ENCODE measurements at regions of chr6 and their contacts with region 1.

Region 1: GRCh38 chr6:46410334-46410953 is 80.8 kb downstream of the RCAN2 start:
- DNase-seq: no peak
- H3K4me3 Mint-ChIP-seq: no peak overlapping the region
- H3K27ac Mint-ChIP-seq: no peak overlapping the region
- H3K4me1 Mint-ChIP-seq: no peaks in the 10 kb centered on the region
- H3K27me3 Mint-ChIP-seq: peaks cover 9% of the 10 kb centered on the region

Region 2: GRCh38 chr6:45930420-45931040 is 479.9 kb before region 1 on chr6:
- intact Hi-C with region 1: loop called (anchors 5 kb)
- DNase-seq: peak; percentile 33
- H3K4me3 Mint-ChIP-seq: no peak overlapping the region
- H3K27ac Mint-ChIP-seq: no peak overlapping the region
- H3K4me1 Mint-ChIP-seq: peaks cover 23% of the 10 kb centered on the region
- H3K27me3 Mint-ChIP-seq: no peaks in the 10 kb centered on the region

Region 3: GRCh38 chr6:46042355-46042999 is 368.0 kb before region 1 on chr6:
- intact Hi-C with region 1: loop called (anchors 5 kb)
- DNase-seq: no peak
- H3K4me3 Mint-ChIP-seq: no peak overlapping the region
- H3K27ac Mint-ChIP-seq: no peak overlapping the region
- H3K4me1 Mint-ChIP-seq: peaks cover 6% of the 10 kb centered on the region
- H3K27me3 Mint-ChIP-seq: peaks cover 5% of the 10 kb centered on the region

Region 4: DNA sequence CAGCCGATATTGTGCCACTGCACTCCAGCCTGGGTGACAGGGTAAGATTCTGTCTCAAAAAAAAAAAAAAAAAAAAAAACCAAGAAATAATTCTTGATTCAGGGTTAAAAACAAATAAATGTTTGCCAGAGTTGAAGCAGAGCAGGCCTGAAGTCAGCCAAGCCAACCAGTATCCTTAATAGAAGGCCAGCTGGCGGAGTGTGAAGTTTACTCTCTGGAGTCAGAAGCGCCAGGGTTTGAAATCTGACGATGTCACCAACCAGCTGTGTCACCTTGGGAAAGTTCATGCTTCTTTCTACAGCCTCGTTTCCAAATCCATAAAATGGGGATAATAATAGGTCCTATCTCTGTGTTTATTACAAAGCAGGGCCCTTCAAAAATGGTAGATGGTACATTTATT is 166.7 kb before region 1 on chr6:
- intact Hi-C with region 1: no loop called
- DNase-seq: no peak
- H3K4me3 Mint-ChIP-seq: no peak overlapping the region
- H3K27ac Mint-ChIP-seq: no peak overlapping the region
- H3K4me1 Mint-ChIP-seq: peaks cover 2% of the 10 kb centered on the region
- H3K27me3 Mint-ChIP-seq: peaks cover 17% of the 10 kb centered on the region

Region 5: DNA sequence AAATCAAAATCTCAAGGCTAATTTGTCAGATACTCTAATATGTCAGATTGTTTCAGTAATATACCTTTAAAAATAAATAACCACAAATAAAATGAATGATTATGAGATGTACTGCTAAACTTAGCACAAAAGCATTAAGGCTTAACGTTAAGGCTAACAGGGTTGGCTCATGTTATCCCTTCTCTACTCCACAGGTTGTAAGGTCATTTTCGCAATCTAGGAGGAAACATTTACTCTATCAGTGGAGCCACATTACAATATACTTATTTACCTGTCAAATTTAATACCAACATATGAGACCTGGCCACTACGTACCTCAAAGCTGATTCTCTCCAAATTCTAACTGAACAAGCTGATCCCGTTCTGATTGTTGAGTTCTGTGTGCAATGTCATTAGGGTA is 14.9 kb before region 1 on chr6:
- intact Hi-C with region 1: no loop called
- DNase-seq: no peak
- H3K4me3 Mint-ChIP-seq: no peak overlapping the region
- H3K27ac Mint-ChIP-seq: no peak overlapping the region
- H3K4me1 Mint-ChIP-seq: no peaks in the 10 kb centered on the region
- H3K27me3 Mint-ChIP-seq: peaks cover 41% of the 10 kb centered on the region

Measured in activated T-helper 2 cell treated with anti-CD3 and anti-CD28 coated beads, Interferon-gamma antibody, Interleukin-2, Interleukin-4, amounts not matched to agents 10 μg/mL and 5 μg/mL and 100 μg/mL, durations not matched to agents 14 hours and 24 hours and 36 hours (primary cell).